Naive thymus-derived CD4-positive, alpha-beta T cell (primary cell): ENCODE measurements at regions of chr6 and their contacts with region 1.

Region 1: DNA sequence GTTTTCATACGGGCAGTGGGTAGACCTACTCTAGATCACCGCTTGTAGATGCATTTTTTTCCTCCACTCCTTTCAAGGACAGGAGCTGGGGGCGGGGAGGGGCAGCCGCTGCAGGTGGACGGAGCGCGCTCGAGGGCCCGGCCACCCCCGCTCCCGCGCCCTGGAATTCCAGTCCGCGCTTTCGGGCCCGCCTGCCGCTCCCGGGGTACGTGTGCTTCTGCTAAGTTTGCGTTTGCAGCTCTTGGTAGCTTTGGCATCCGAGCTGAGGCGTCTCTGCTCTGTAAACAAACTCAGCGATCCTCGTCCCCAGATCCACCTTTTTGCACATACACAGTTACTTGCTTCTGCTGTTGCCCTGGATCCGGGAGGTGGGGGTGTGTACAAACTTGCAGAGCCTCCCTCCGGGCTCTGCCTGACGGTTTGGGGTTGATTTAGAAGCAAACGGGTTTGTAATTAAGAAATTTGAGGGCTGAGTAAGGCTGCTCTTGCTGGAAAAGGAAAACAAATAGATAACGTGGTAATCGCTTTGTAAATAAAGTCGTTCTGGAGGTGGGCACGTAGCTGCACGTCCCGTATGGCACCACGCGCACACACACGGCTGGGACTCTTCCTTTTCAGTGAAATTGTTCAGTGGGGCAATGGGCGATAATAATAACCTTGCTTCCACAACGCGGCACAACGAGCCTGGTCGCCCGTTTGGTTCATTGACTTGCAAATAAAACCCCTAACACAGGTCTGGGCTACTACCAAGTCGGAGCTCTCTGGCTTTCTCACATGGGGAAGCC is 976 bp upstream of the CITED2 start:
- DNase-seq: peak; percentile 70 to 91 (median 88)
- ATAC-seq: peak; percentile 68
- H3K4me3 ChIP-seq: peak overlapping the region; percentile 71
- H3K4me3 Mint-ChIP-seq: peak overlapping the region; percentile 95 to 100 (median 100)
- H3K27ac ChIP-seq: peak overlapping the region; percentile 82
- H3K27ac Mint-ChIP-seq: peak overlapping the region; percentile 95 to 100 (median 98)
- H3K4me1 ChIP-seq: peaks cover 20 to 26% of the 10 kb centered on the region in 2 donors
- H3K4me1 Mint-ChIP-seq: peaks cover 21 to 38% (median 26%) of the 10 kb centered on the region in 7 donors
- H3K27me3 ChIP-seq: no peaks in the 10 kb centered on the region
- H3K27me3 Mint-ChIP-seq: no peaks in the 10 kb centered on the region

Region 2: DNA sequence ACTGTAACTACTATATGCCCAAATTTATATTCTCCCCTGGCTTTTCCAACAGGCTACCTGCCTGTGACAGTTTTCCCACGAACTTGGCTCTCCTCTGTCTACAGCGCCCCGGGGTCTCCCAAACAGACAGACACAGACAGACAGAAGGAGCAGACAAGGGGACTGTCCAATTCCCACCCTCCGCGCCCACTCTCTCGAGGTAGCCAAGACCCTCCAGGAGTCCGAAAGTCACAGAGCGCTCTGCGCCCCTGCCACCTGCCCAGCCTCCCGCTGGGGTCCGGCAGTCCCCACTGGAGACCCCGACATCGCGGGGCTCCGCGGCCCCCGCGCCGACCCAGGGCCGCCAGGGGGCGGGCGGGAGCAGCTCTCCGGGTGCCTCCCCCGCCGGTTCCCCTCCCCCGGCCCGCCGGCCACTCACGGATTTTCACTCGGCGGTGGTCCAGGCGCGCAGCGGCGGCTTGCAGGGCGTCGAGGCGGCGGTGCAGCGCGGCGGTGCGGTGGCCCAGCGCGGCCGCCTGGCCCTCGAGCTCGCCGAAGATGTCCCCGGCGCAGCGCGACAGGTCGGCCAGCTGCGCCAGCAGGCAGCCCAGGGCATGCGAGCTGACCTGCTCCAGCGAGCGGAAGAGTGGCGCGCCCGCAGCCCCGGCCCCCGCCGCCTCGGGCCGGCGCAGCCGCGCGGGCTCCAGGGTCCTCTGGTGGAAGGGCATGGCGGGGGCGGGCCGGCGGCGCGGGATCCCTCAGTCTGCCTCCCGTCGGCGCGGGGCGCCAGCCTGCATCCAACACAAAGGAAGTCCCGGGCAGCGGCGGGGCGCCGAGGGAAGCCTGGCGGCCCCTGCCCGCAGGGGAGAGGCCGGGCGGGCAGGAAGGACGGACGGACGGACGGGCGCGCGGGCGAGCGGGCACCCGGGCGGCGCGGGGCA is 683.1 kb before region 1 on chr6:
- CTCF ChIA-PET with region 1: no interaction called
- POLR2A ChIA-PET with region 1: no interaction called
- intact Hi-C with region 1: loop called in 1 of 2 experiments (anchors 5 kb)
- DNase-seq: peak; percentile 20 to 74 (median 37)
- ATAC-seq: peak; percentile 80
- H3K4me3 ChIP-seq: peak overlapping the region; percentile 22
- H3K4me3 Mint-ChIP-seq: peak overlapping the region; percentile 53 to 88 (median 86)
- H3K27ac ChIP-seq: no peak overlapping the region
- H3K27ac Mint-ChIP-seq: peak overlapping the region in 2 of 9 donors; percentile 49 to 77
- H3K4me1 ChIP-seq: peaks cover 0 to 3% of the 10 kb centered on the region in 2 donors
- H3K4me1 Mint-ChIP-seq: peaks cover 0 to 13% (median 9%) of the 10 kb centered on the region in 7 donors
- H3K27me3 ChIP-seq: peaks cover 0 to 6% of the 10 kb centered on the region in 2 donors
- H3K27me3 Mint-ChIP-seq: peaks cover 23 to 56% (median 46%) of the 10 kb centered on the region in 5 donors

Region 3: DNA sequence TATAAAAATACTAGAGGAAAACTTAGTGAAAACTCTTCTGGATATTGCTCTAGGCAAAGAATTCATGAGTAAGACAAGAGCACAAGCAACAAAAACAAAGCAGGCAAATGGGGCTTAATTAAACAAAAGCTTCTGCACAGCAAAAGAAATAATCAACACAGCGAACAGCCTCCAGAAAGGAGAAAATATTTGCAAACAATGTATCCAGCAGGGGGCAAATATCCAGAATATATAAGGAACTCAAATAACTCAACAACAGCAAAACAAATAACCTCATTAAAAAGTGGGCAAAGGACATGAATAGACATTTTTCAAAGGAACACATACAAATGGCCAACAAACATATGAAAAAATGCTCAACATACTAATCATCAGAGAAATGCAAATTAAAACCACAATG is 257.7 kb before region 1 on chr6:
- CTCF ChIA-PET with region 1: no interaction called
- POLR2A ChIA-PET with region 1: interaction called, 57 read pairs
- intact Hi-C with region 1: no loop called
- DNase-seq: no peak
- ATAC-seq: no peak
- H3K4me3 ChIP-seq: no peak overlapping the region
- H3K4me3 Mint-ChIP-seq: peak overlapping the region in 8 of 10 donors; percentile 14 to 79 (median 50)
- H3K27ac ChIP-seq: no peak overlapping the region
- H3K27ac Mint-ChIP-seq: peak overlapping the region in 8 of 9 donors; percentile 41 to 94 (median 74)
- H3K4me1 ChIP-seq: peaks cover 22 to 45% of the 10 kb centered on the region in 2 donors
- H3K4me1 Mint-ChIP-seq: peaks cover 26 to 59% (median 52%) of the 10 kb centered on the region in 7 donors
- H3K27me3 ChIP-seq: no peaks in the 10 kb centered on the region
- H3K27me3 Mint-ChIP-seq: no peaks in the 10 kb centered on the region

Region 4: GRCh38 chr6:139219271-139219729 is 156.1 kb before region 1 on chr6:
- CTCF ChIA-PET with region 1: interaction called, 49 read pairs
- POLR2A ChIA-PET with region 1: interaction called, 42 read pairs
- intact Hi-C with region 1: no loop called
- DNase-seq: peak; percentile 39 to 76 (median 60)
- ATAC-seq: peak; percentile 100
- H3K4me3 ChIP-seq: no peak overlapping the region
- H3K4me3 Mint-ChIP-seq: peak overlapping the region in 8 of 10 donors; percentile 41 to 68 (median 58)
- H3K27ac ChIP-seq: no peak overlapping the region
- H3K27ac Mint-ChIP-seq: peak overlapping the region; percentile 49 to 92 (median 78)
- H3K4me1 ChIP-seq: peaks cover 5 to 10% of the 10 kb centered on the region in 2 donors
- H3K4me1 Mint-ChIP-seq: peaks cover 6 to 20% (median 12%) of the 10 kb centered on the region in 7 donors
- H3K27me3 ChIP-seq: no peaks in the 10 kb centered on the region
- H3K27me3 Mint-ChIP-seq: no peaks in the 10 kb centered on the region

Region 5: GRCh38 chr6:139490482-139490881 is 115.1 kb after region 1 on chr6:
- CTCF ChIA-PET with region 1: no interaction called
- POLR2A ChIA-PET with region 1: interaction called, 3 read pairs
- intact Hi-C with region 1: loop called in 1 of 2 experiments (anchors 2 kb)
- DNase-seq: peak in 7 of 9 donors; percentile 5 to 34 (median 23)
- ATAC-seq: peak; percentile 70
- H3K4me3 ChIP-seq: no peak overlapping the region
- H3K4me3 Mint-ChIP-seq: peak overlapping the region in 6 of 10 donors; percentile 1 to 62 (median 9)
- H3K27ac ChIP-seq: no peak overlapping the region
- H3K27ac Mint-ChIP-seq: peak overlapping the region in 5 of 9 donors; percentile 5 to 52 (median 30)
- H3K4me1 ChIP-seq: no peaks in the 10 kb centered on the region
- H3K4me1 Mint-ChIP-seq: peaks cover 5 to 15% (median 9%) of the 10 kb centered on the region in 7 donors
- H3K27me3 ChIP-seq: no peaks in the 10 kb centered on the region
- H3K27me3 Mint-ChIP-seq: no peaks in the 10 kb centered on the region

Region 6: DNA sequence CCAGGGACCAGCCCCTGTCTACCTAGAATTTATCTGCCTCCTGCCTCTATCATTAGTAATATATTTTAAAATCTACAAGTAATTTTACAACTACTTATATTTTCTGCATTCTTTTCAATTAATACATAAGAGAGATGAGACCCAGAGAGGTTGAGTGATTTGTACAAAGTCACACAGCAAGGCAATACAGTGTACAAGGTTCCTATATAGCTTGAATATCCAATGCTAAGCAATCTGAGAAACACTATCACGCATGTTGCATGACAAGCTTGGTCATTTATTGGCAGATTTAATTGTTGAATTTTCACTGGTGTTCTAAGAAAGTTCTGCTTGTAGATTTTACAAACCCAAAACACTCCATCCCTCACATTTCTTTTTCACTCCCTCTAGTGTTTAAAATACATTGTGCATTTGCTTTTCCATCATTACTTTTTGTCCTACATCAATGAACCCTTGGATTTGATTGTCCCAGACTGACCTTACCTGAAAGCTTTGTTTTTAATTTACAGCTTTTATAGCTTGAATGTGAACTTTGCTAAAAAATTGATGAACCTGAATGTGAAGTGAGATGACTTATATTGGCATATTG is 519.9 kb after region 1 on chr6:
- CTCF ChIA-PET with region 1: no interaction called
- POLR2A ChIA-PET with region 1: no interaction called
- intact Hi-C with region 1: loop called (anchors 1 to 5 kb)
- DNase-seq: no peak
- ATAC-seq: no peak
- H3K4me3 ChIP-seq: no peak overlapping the region
- H3K4me3 Mint-ChIP-seq: no peak overlapping the region
- H3K27ac ChIP-seq: no peak overlapping the region
- H3K27ac Mint-ChIP-seq: peak overlapping the region in 1 of 9 donors; percentile 21
- H3K4me1 ChIP-seq: no peaks in the 10 kb centered on the region
- H3K4me1 Mint-ChIP-seq: no peaks in the 10 kb centered on the region
- H3K27me3 ChIP-seq: no peaks in the 10 kb centered on the region
- H3K27me3 Mint-ChIP-seq: peaks cover 0 to 9% (median 0%) of the 10 kb centered on the region in 5 donors